Mucosa of descending colon (tissue), 3 donors: ENCODE measurements at regions of chr3 and their contacts with region 1.

Region 1: GRCh38 chr3:109081746-109082510 is 36.0 kb downstream of the MORC1 start:
- DNase-seq: peak in 2 of 3 donors; percentile 20 to 58
- ATAC-seq: peak; percentile 86
- H3K4me3 ChIP-seq: no peak overlapping the region
- H3K4me1 ChIP-seq: no peaks in the 10 kb centered on the region
- CTCF ChIP-seq: peak; percentile 51

Region 2: DNA sequence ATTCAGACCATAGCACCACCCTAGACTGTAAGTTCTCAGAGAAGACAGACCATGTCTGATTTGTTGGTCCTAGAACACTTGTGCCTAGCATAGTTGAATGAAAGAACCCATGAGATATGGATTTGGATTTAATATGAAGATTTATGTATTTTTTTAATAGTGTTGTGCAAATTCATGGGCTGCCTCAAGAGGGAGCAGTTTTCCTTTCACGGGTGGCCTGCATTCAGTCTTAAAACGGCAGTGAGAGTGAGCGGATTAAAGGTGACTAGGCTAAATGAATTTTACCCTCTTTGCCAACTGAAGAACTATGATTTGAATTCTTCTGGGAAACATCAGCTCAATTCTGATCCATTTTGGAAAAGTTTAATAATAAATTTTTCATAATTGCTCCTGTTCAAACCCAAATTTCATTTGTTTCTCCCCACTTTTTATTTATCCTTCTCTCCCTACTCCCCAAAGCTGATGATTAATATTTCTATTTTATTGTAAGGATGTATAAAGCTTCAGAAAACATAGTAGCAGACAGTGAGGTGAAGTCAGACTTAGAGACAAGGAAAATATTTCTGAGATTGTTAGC is 31.2 kb before region 1 on chr3:
- intact Hi-C with region 1: loop called in 1 of 2 experiments (anchors 2 kb)
- DNase-seq: peak in 1 of 3 donors; percentile 39
- ATAC-seq: peak; percentile 64
- H3K4me3 ChIP-seq: no peak overlapping the region
- H3K4me1 ChIP-seq: no peaks in the 10 kb centered on the region
- CTCF ChIP-seq: no peak